ENCODE measurements at regions of chr20 and their contacts with region 1.

Region 1: DNA sequence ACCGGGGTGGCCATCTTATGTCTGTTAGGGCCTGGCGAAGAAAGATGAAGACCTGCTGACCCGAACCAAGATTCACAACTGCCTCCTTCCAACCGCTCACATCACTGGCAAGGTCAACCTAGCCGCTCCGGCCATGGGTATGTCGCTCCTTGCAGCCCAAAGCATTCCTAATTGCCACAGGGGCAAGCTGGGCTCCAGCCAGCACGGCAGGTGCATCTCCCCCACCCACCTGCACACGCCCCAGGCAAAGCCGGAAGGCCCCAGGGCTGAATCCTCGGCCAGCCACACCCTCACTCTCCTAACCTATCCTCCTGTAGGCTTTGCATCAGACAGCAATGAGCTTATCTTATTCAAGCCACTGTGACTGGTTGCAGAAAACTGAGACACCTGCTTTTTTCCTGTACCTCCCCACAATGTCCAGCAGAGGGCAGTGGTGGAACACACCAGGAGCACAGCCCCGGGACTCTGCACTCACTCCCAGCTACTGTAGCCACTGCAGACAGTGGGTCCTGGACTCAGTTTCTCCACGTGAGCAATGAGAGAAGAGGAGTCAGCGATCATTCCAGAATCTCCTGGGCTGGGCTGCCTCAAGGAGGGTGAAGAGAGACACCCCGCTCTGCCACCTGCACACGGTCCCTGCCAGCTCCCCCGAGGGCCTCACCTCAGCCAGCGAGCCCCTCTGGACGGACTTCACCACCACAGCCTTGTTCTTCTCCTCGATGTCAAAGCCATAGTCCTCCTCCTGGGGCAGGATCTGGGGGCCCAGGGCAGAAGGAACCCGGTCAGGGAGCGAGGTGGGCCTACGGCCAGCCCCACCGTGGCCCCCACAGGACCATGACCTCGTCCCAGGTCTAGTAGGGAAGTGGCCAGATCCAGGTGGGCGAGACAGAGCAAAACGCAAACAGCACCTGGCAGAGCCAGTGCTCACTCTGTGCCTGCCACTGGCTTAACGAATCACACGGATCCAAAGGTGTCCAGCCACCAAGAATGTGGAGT is 170.0 kb downstream of the PREX1 start:
- DNase-seq: peak; percentile 92
- H3K4me3 ChIP-seq: no peak overlapping the region; a peak in 1 of 4 replicates
- H3K27ac ChIP-seq: no peak overlapping the region
- H3K4me1 ChIP-seq: no peaks in the 10 kb centered on the region
- H3K27me3 ChIP-seq: no peaks in the 10 kb centered on the region
- CTCF ChIP-seq: peak; percentile 94
- EP300 ChIP-seq: no peak
- RAD21 ChIP-seq: peak; percentile 99

Region 2: DNA sequence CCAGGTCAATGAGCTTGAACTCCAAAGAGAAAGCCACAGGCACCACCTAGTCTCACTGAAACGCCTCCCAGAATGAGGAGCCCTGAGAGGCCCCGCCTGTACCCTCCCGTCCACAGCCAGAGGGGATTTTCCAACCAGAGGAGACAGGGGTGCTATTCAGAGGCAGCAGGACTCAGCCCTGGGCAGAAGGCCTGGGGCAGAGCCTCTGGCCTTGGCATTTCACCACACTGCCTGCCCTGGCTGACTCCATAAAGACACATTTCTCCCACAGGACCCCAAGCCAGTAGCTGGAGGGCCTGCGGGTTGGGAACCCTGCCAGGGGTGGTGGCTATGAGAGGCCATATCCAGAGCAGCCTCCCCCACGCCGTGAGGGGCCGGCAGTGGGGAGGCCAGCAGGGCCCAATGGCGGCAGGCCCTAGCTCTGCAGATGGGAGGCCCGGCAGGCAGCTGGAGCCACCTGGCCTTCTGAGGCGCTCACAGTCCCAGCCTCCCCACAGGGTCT is 10.7 kb after region 1 on chr20:
- CTCF ChIA-PET with region 1: interaction called, 29 read pairs
- POLR2A ChIA-PET with region 1: no interaction called
- DNase-seq: peak; percentile 43
- H3K4me3 ChIP-seq: no peak overlapping the region
- H3K27ac ChIP-seq: no peak overlapping the region; a peak in 1 of 4 replicates
- H3K4me1 ChIP-seq: peaks cover 0 to 19% of the 10 kb centered on the region in 2 experiments; a peak in 1 of 4 replicates
- H3K27me3 ChIP-seq: no peaks in the 10 kb centered on the region
- CTCF ChIP-seq: no peak
- EP300 ChIP-seq: no peak
- RAD21 ChIP-seq: no peak

Region 3: GRCh38 chr20:48697879-48698724 is 40.3 kb after region 1 on chr20:
- CTCF ChIA-PET with region 1: interaction called, 15 read pairs
- POLR2A ChIA-PET with region 1: no interaction called
- DNase-seq: peak; percentile 76
- H3K4me3 ChIP-seq: no peak overlapping the region
- H3K27ac ChIP-seq: no peak overlapping the region
- H3K4me1 ChIP-seq: peaks cover 13 to 28% of the 10 kb centered on the region in 2 experiments; a peak in 2 of 4 replicates
- H3K27me3 ChIP-seq: no peaks in the 10 kb centered on the region
- CTCF ChIP-seq: no peak
- EP300 ChIP-seq: no peak
- RAD21 ChIP-seq: no peak

Region 4: GRCh38 chr20:48787861-48788375 is 130.1 kb after region 1 on chr20:
- CTCF ChIA-PET with region 1: interaction called, 16 read pairs
- POLR2A ChIA-PET with region 1: no interaction called
- DNase-seq: no peak
- H3K4me3 ChIP-seq: no peak overlapping the region
- H3K27ac ChIP-seq: no peak overlapping the region
- H3K4me1 ChIP-seq: peaks cover 3 to 22% of the 10 kb centered on the region in 2 experiments; a peak in 2 of 4 replicates
- H3K27me3 ChIP-seq: no peaks in the 10 kb centered on the region
- CTCF ChIP-seq: no peak
- EP300 ChIP-seq: no peak
- RAD21 ChIP-seq: no peak

Region 5: DNA sequence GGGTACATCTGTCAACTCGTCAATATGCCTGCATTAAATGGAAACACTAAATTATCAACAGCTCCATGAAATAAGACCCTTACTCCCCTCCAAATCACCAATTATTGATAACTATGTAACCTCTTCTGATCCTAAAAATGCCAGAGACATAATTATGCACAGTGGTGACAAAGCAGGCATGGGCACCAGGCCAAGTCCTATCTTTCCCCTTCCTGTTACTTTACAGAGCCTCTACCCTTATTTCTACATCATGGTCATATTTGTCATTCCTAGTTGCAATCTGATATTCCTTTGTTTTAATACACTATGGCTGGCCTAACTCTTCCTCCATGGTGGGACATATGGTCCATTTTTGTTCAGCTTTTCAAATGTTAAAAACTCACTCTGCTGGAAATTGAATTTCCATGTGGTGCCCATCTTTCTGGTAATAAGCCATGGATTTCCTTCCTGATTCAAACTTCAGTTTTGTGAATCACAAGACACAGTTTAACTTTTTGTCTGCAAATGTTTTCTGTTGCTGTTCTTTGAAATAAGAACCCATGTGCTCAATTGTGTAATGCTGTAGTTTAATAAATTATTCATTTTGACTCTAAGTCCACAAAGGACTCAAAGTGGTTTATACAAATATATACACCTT is 222.0 kb after region 1 on chr20:
- CTCF ChIA-PET with region 1: interaction called, 17 read pairs
- POLR2A ChIA-PET with region 1: no interaction called
- DNase-seq: no peak
- H3K4me3 ChIP-seq: no peak overlapping the region
- H3K27ac ChIP-seq: peak overlapping the region in 1 of 2 experiments; percentile 17; a peak in 1 of 4 replicates
- H3K4me1 ChIP-seq: peaks cover 0 to 6% of the 10 kb centered on the region in 2 experiments; a peak in 1 of 4 replicates
- H3K27me3 ChIP-seq: no peaks in the 10 kb centered on the region
- CTCF ChIP-seq: no peak
- EP300 ChIP-seq: no peak
- RAD21 ChIP-seq: no peak